ENCODE measurements at regions of chr19 and their contacts with region 1.

Region 1: GRCh38 chr19:48321622-48322591 is 3.4 kb upstream of the EMP3 start:
- DNase-seq: peak; percentile 99 to 100
- ATAC-seq: peak; percentile 95
- H3K4me3 ChIP-seq: peak overlapping the region; percentile 17 to 62
- H3K27ac ChIP-seq: peak overlapping the region; percentile 50 to 91
- H3K4me1 ChIP-seq: no peaks in the 10 kb centered on the region
- H3K27me3 ChIP-seq: no peaks in the 10 kb centered on the region

Region 2: DNA sequence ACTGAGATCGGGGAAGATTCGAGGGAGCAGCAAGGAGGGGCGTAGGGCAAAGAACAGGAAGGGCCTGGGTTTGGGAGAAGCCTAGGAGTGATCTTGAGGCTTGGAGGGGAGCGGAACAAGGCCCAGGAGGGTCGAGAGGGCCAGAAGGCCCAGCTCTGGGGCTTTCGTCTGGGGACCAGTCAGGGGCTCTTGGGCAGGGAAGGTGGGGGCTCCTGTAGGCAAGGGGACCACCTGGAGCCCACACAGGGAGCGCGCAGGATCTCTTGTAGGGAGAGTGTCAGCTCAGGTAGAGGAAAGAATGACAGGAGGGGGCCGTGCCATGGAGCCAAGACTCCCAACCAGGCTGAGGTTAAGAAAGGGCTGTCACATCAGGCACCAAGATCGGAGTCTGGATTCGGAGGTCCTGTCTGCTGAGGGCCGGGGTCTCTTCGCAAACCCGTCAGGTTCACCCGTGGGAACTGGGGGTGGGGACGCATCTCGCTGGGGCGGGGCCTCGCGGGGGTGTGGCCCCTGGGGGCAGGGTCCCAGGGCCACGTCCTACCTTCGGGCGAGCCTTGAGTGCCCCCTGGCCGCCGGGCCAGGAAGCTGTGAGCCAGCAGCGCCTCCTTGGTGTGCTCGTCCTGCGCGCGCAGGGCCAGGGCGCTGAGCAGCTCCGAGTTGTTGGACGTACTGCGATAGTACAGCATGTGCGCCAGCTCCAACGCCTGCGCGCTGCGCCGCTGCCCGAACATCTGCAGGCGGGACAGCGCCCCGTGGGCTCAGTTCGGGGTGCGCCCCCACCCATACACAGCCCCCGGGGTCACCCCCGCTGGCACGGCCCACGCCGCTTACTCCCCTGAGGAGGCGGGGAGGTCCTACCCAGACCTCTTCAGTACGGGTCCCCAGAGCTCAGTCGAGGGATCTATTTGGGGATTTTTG is 11.8 kb after region 1 on chr19:
- intact Hi-C with region 1: loop called in 1 of 2 experiments (anchors 2 kb)
- DNase-seq: peak; percentile 96
- ATAC-seq: peak; percentile 93
- H3K4me3 ChIP-seq: no peak overlapping the region
- H3K27ac ChIP-seq: peak overlapping the region in 1 of 2 donors; percentile 41
- H3K4me1 ChIP-seq: no peaks in the 10 kb centered on the region
- H3K27me3 ChIP-seq: no peaks in the 10 kb centered on the region

Region 3: DNA sequence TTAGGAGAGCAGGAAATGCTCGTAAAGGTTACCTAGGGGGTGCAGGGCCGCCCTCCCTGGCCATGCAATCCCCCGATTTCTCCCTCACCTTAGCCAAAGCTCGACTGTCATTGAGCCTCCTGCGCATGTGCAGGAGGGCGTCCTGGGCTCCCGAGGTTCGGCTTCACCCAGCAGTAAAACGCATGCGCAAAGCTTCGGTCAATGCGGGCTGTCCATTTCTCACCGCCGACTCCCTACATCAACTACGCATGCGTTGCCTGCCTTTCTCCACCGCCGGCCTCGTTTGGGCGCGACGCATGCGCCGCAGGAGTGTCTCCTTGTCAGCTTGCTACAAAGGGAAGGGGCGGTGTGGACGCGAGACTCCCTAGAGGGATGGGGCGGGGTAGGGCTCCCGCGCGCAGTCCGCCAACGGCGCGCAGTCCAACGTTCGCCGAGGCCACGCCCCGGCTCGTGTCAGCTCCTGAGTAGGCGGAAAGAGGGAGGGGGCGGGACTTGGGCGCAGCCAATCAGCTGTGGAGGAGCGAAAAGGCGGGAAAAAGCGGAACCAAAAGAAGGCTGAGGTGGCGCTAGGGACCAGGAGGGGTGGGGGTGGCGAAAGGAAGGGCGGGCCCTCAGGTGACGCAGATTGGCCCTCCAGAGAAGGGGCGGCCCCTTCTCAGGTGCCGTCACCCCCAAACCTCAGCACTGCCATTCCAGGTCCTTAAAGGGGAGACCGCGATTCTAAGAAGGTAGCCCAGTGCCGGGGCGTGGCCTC is 42.1 kb after region 1 on chr19 and contains the starts of genes SYNGR4 and TMEM143:
- intact Hi-C with region 1: loop called in 1 of 2 experiments (anchors 5 kb)
- DNase-seq: peak; percentile 99
- ATAC-seq: peak; percentile 98
- H3K4me3 ChIP-seq: peak within 1 kb of the TSS; percentile 19 to 51
- H3K27ac ChIP-seq: peak within 1 kb of the TSS; percentile 46 to 71
- H3K4me1 ChIP-seq: no peaks in the 10 kb centered on the region
- H3K27me3 ChIP-seq: no peaks in the 10 kb centered on the region
- total RNA-seq, gene SYNGR4: not detected
- total RNA-seq, gene TMEM143: 4.9 to 9.2 TPM

Region 4: DNA sequence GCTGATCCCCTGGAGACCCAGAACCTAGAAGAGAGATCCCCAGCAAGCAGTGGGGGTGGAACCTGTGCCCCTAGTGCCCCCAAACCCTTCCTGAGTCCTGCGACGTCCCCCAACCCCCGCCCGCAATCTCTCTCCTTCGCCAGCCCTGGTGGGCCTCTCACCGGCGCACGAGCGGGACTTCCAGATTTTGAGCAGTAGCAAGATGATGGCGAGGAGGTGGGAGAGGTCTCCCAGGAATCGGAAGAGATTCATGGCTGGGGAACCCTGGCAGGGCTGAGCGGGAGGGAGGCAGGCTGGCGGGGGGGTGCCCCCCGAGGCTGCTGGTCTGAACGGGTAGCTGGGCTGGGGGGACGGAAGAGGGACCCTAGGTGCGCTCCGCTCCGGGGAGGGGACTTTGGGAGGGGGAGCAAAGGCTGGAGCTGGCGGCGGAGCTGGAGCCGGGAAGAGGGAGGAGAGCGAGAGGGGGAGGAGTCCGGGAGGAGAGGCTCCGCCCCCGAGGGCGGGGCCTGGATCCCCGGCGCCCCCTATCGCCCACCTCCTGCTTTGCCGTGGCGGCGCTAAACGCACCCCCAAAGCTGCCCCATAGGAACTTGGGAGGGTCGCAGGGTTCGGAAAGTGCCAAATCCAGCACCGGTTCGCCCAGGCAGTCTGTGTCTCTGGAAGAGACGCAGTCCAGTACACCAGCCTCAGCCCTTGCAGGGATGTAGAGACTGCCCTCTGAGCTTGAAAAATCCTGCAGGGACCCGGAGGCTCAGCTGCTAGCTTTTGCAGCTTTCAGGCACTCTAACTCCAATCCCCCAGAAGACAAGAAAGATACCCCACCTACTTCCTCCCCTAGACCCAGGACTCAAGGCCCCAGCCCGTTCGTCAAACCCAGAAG is 69.4 kb after region 1 on chr19 and contains the start of gene KDELR1:
- intact Hi-C with region 1: loop called in 1 of 2 experiments (anchors 5 kb)
- DNase-seq: peak; percentile 85 to 92
- ATAC-seq: peak; percentile 95
- H3K4me3 ChIP-seq: peak within 1 kb of the TSS; percentile 68 to 92
- H3K27ac ChIP-seq: peak within 1 kb of the TSS; percentile 28 to 37
- H3K4me1 ChIP-seq: no peaks in the 10 kb centered on the region
- H3K27me3 ChIP-seq: no peaks in the 10 kb centered on the region
- total RNA-seq, gene KDELR1: 94.0 to 128 TPM

Region 5: GRCh38 chr19:48445606-48446481 is 123.9 kb after region 1 on chr19 and contains the start of gene GRWD1:
- intact Hi-C with region 1: loop called in 1 of 2 experiments (anchors 10 kb)
- DNase-seq: peak; percentile 95
- ATAC-seq: peak; percentile 90
- H3K4me3 ChIP-seq: peak within 1 kb of the TSS; percentile 68 to 75
- H3K27ac ChIP-seq: peak within 1 kb of the TSS in 1 of 2 donors; percentile 58
- H3K4me1 ChIP-seq: no peaks in the 10 kb centered on the region
- H3K27me3 ChIP-seq: no peaks in the 10 kb centered on the region
- total RNA-seq, gene GRWD1: 21.4 to 25.8 TPM

Measured in aorta (tissue), 5 donors.